ENCODE measurements at regions of chr18 and their contacts with region 1.

Region 1: GRCh38 chr18:41353777-41354528 is 601.1 kb upstream of the PIK3C3 start:
- DNase-seq: no peak
- ATAC-seq: no peak
- H3K4me3 Mint-ChIP-seq: no peak overlapping the region
- H3K27ac Mint-ChIP-seq: no peak overlapping the region
- H3K4me1 Mint-ChIP-seq: no peaks in the 10 kb centered on the region
- H3K27me3 Mint-ChIP-seq: no peaks in the 10 kb centered on the region
- CTCF ChIP-seq: no peak

Region 2: DNA sequence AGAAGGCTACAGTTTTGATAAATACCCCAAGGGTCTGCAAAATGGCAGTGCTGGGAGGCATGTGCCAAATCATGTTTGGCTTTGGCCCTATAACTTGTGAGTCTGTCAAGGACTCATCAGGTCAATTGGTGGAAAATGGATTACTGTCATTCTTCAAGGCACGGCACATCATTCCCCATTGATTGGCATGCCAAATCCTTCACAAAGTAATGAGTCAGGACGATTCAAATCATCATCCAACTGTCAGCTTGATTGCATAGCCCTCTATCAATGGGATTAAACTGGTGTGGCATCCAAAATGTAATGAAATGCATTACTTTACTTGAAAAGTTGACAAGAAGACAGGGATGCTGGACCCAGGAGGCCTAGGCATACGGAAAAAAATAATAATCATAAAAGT is 159.5 kb after region 1 on chr18:
- CTCF ChIA-PET with region 1: no interaction called
- POLR2A ChIA-PET with region 1: no interaction called
- intact Hi-C with region 1: no loop called
- DNase-seq: no peak
- ATAC-seq: no peak
- H3K4me3 Mint-ChIP-seq: no peak overlapping the region
- H3K27ac Mint-ChIP-seq: no peak overlapping the region
- H3K4me1 Mint-ChIP-seq: no peaks in the 10 kb centered on the region
- H3K27me3 Mint-ChIP-seq: no peaks in the 10 kb centered on the region
- CTCF ChIP-seq: no peak

Region 3: GRCh38 chr18:42850174-42851083 is 1496.5 kb after region 1 on chr18:
- CTCF ChIA-PET with region 1: no interaction called
- POLR2A ChIA-PET with region 1: no interaction called
- intact Hi-C with region 1: loop called (anchors 5 kb)
- DNase-seq: no peak
- ATAC-seq: no peak
- H3K4me3 Mint-ChIP-seq: no peak overlapping the region
- H3K27ac Mint-ChIP-seq: no peak overlapping the region
- H3K4me1 Mint-ChIP-seq: no peaks in the 10 kb centered on the region
- H3K27me3 Mint-ChIP-seq: no peaks in the 10 kb centered on the region
- CTCF ChIP-seq: no peak